ENCODE measurements at regions of chr2 and their contacts with region 1.

Region 1: DNA sequence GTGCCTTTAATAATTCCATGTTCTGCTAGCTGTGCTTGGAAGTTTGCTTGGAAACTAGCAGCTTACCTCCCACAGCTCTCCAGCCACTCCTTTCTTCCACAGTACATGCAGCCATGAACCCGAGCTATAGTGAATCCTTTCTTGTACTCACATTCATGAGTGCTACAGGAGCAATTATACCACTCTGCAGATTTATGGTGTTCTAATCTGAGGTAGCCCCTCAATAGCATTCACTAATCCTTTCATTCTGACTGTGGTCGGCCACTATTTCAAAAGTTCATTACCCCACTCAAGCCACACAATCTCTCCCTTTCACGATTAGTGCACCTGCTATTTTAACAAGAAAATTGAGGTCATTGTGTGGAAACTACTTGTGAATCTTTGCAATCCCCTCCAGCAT is 53.2 kb downstream of the CSRNP3 start:
- DNase-seq: no peak
- ATAC-seq: peak; percentile 73
- H3K4me3 ChIP-seq: no peak overlapping the region
- H3K27ac ChIP-seq: no peak overlapping the region
- H3K4me1 ChIP-seq: no peaks in the 10 kb centered on the region
- H3K27me3 ChIP-seq: no peaks in the 10 kb centered on the region
- CTCF ChIP-seq: no peak
- EP300 ChIP-seq: no peak
- POLR2A ChIP-seq: no peak
- RAD21 ChIP-seq: no peak

Region 2: DNA sequence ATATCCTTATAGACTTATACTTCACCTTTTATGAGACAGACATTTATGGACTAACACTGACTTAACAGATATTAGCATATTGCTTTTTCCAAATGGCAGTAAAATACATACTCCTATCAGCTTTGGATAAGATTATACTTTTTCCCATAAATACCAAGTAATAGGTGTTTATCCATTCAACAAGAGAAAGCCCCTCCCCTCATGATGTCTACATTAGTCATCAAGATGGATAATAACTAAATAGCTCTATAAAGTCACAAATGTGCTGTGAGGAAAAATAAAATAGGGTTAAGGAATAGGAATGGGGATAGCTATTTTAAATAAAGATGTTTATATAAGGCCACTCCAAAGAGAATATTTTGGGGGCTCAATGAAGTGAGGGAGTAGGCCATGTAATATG is 13.8 kb before region 1 on chr2:
- CTCF ChIA-PET with region 1: interaction called, 12 read pairs
- POLR2A ChIA-PET with region 1: interaction called, 3 read pairs
- RAD21 ChIA-PET with region 1: interaction called, 4 read pairs
- SMC1A ChIA-PET with region 1: interaction called, 27 read pairs
- in situ Hi-C with region 1: no loop called
- intact Hi-C with region 1: no loop called
- DNase-seq: no peak
- ATAC-seq: no peak
- H3K4me3 ChIP-seq: no peak overlapping the region
- H3K27ac ChIP-seq: no peak overlapping the region
- H3K4me1 ChIP-seq: no peaks in the 10 kb centered on the region
- H3K27me3 ChIP-seq: no peaks in the 10 kb centered on the region
- CTCF ChIP-seq: no peak
- EP300 ChIP-seq: no peak
- POLR2A ChIP-seq: no peak
- RAD21 ChIP-seq: no peak

Region 3: GRCh38 chr2:165544897-165545296 is 22.2 kb after region 1 on chr2:
- CTCF ChIA-PET with region 1: interaction called, 5 read pairs
- POLR2A ChIA-PET with region 1: no interaction called
- RAD21 ChIA-PET with region 1: interaction called, 3 read pairs
- SMC1A ChIA-PET with region 1: interaction called, 10 read pairs
- in situ Hi-C with region 1: no loop called
- intact Hi-C with region 1: no loop called
- DNase-seq: no peak
- ATAC-seq: peak; percentile 99
- H3K4me3 ChIP-seq: no peak overlapping the region
- H3K27ac ChIP-seq: no peak overlapping the region
- H3K4me1 ChIP-seq: no peaks in the 10 kb centered on the region
- H3K27me3 ChIP-seq: no peaks in the 10 kb centered on the region
- CTCF ChIP-seq: no peak
- EP300 ChIP-seq: peak; percentile 8 to 70; a peak in 1 of 4 replicates
- POLR2A ChIP-seq: no peak
- RAD21 ChIP-seq: no peak

Region 4: DNA sequence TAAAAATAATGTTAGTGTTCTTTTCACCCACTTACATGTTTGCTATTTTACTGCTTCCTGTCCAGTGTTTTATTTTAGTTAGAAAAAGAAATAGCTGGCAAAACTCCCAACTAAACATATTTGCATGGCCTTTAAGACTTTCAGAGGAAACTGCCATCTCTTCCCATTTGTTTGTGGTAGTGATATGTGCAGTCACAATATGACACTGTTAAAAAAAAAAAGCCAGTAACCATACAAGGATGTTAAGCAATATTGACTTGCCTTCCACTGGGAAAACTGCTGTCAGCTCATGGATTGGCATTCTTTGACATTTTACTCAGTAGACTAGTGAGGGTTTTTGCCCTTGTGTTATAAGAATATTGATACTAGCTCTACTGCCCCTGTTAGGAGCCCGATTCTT is 1394.7 kb after region 1 on chr2:
- CTCF ChIA-PET with region 1: no interaction called
- POLR2A ChIA-PET with region 1: no interaction called
- RAD21 ChIA-PET with region 1: no interaction called
- SMC1A ChIA-PET with region 1: no interaction called
- in situ Hi-C with region 1: no loop called
- intact Hi-C with region 1: no loop called
- DNase-seq: no peak
- ATAC-seq: no peak
- H3K4me3 ChIP-seq: no peak overlapping the region
- H3K27ac ChIP-seq: no peak overlapping the region
- H3K4me1 ChIP-seq: no peaks in the 10 kb centered on the region
- H3K27me3 ChIP-seq: no peaks in the 10 kb centered on the region
- CTCF ChIP-seq: no peak
- EP300 ChIP-seq: no peak
- POLR2A ChIP-seq: no peak
- RAD21 ChIP-seq: no peak

Measured in GM12878 (cell line).